ENCODE measurements at regions of chr5 and their contacts with region 1.

Region 1: DNA sequence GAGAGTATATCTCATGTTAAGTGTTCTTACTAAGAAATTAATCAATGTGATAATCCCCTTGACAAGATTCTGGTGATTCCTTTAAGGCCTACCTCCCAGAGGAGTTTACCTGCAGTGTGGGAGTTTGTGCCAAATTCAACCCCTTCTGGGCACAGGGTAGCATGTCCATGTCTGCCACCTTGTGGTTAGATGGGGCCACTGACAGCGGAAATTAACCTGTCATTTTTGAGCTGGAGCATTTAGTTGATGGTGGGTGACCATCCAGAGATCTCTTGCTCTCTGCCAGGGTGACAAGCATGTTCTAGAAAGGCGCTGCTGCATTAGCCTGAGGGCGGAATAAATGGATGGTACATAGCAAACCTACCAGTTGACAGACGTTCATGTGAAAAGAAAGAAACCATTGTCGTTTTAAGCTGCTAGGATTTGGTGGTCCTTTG is 132.2 kb downstream of the FBXO4 start:
- DNase-seq: peak; percentile 38
- H3K4me3 ChIP-seq: no peak overlapping the region
- H3K27ac ChIP-seq: no peak overlapping the region
- H3K4me1 ChIP-seq: peaks cover 16% of the 10 kb centered on the region
- H3K27me3 ChIP-seq: no peaks in the 10 kb centered on the region
- CTCF ChIP-seq: peak; percentile 84

Region 2: GRCh38 chr5:41707853-41708603 is 349.2 kb before region 1 on chr5:
- CTCF ChIA-PET with region 1: no interaction called
- dilution Hi-C with region 1: no loop called
- in situ Hi-C with region 1: no loop called
- intact Hi-C with region 1: loop called (anchors 5 kb)
- DNase-seq: peak; percentile 37
- H3K4me3 ChIP-seq: no peak overlapping the region
- H3K27ac ChIP-seq: no peak overlapping the region
- H3K4me1 ChIP-seq: no peaks in the 10 kb centered on the region
- H3K27me3 ChIP-seq: no peaks in the 10 kb centered on the region
- CTCF ChIP-seq: peak; percentile 57 to 69

Region 3: DNA sequence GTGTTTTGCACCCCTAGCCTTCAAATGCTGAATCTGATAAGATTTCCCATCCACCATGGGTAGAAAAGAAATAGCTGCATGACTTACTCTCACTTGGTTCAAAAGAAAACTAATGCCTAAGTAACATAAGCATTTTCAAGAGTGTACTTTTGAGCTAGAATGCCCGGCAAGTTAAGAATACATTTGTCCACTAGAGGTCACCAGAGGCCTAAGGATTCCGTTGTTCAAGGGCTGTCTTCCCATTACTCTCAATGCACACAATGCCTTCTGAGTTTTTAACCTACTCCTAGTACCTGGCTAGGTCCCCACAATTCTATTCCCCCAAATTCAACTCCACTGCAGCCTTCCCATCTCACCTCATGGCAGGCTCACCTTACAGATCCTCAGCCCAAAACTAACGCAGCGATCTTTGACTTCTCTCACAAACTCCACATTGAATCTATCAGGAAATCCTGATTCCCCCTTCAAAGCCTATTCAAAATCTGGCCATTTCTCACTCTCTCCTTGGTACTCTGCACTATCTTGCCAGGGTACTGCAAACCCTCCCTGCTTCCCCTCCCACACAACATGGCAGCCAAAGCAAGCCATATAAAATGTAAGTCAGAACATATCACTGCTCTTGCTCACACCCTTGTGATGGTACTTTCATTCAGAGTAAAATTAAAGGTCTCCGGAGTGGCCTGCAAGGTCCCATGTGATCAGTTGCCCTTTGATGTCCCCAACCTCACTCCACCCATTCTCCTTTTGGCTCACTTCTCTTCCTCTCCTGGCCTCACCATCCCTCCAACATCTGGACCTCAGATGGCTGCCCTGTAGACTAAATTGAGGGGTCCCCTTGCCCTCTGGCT is 200.4 kb before region 1 on chr5:
- CTCF ChIA-PET with region 1: interaction called, 5 read pairs
- dilution Hi-C with region 1: no loop called
- in situ Hi-C with region 1: loop called (anchors 10 to 25 kb)
- intact Hi-C with region 1: loop called (anchors 1 kb)
- DNase-seq: peak; percentile 47
- H3K4me3 ChIP-seq: no peak overlapping the region
- H3K27ac ChIP-seq: no peak overlapping the region
- H3K4me1 ChIP-seq: no peaks in the 10 kb centered on the region
- H3K27me3 ChIP-seq: no peaks in the 10 kb centered on the region
- CTCF ChIP-seq: peak; percentile 74 to 78

Region 4: GRCh38 chr5:42005561-42006153 is 51.6 kb before region 1 on chr5:
- CTCF ChIA-PET with region 1: no interaction called
- dilution Hi-C with region 1: no loop called
- in situ Hi-C with region 1: no loop called
- intact Hi-C with region 1: loop called (anchors 1 kb)
- DNase-seq: peak; percentile 8
- H3K4me3 ChIP-seq: no peak overlapping the region
- H3K27ac ChIP-seq: no peak overlapping the region
- H3K4me1 ChIP-seq: no peaks in the 10 kb centered on the region
- H3K27me3 ChIP-seq: no peaks in the 10 kb centered on the region
- CTCF ChIP-seq: peak; percentile 70 to 75

Measured in mammary epithelial cell (primary cell).